ENCODE measurements at regions of chr3 and their contacts with region 1.

Region 1: DNA sequence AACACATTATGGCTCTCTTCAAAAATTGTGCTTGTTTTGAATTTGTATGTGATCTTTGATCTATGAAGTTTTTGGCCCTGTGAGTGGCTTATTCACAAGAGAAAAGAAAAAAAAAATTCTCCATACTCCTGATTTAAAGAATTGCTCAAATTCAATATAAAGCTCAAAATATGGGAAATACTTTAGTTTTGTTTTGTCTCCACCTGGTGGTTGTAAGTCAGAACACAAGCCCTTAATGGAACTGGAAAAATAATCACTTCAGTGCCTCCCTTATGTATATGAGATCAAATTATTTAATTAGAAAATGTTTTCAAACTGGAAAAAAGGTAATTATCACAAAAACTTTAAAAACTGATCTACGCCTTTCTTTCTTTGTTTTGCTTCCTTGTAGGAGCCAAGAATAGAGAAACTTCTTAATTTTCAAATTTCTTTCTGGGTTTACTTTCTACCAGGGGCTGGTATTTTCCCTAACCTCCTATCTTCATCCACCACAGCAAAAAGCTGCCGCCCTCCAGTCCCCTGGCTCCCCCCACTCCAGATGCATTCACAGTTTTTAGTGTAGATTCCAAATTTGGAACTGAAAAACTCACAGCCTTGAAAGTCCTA is 50.6 kb downstream of the SERP1 start:
- DNase-seq: no peak
- ATAC-seq: peak in 1 of 2 donors; percentile 44

Region 2: DNA sequence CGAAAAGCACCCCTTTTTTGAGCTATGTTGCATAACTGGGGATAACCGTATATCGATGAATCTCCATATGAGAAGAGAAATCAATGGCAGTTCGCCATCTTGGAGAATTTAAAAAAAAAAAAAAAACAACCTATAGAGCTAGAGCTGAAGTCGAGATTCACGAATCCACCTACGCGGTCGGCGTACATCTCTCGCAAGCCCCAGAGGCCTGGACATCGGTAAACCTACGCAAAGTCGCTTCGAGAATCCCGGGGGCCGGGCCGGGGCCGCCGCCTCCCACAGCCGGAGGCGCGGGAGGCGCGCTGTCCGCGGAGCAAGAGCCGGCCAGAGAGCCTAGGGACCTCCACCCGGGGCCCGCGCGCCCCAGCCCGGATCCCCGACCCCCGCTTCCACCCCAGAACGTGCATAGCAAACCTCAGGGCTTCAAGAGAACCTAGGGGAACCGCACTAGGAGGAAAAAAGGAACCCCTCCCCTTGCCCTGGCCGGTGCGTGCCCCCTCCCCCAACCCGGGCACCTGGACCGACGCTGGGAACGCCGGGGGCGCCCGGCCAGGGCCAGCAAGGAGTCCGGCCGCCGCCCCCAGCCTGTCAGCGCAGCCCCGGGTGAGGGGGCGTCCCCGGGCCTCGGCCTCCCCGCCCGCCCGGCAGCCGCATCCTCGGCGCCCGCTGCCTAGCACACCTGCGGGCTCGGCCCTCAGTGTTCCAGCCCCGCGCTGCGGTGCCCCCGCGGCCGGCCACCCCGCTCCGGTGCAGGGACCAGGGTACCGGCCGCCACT is 525.5 kb before region 1 on chr3:
- intact Hi-C with region 1: loop called in 1 of 2 experiments (anchors 10 kb)
- DNase-seq: peak; percentile 88
- ATAC-seq: peak; percentile 63 to 76

Region 3: GRCh38 chr3:150227839-150228238 is 267.8 kb before region 1 on chr3:
- intact Hi-C with region 1: loop called in 1 of 2 experiments (anchors 2 kb)
- DNase-seq: peak; percentile 48
- ATAC-seq: peak; percentile 59 to 61

Region 4: GRCh38 chr3:150286390-150287147 is 209.1 kb before region 1 on chr3:
- intact Hi-C with region 1: loop called (anchors 2 to 5 kb)
- DNase-seq: no peak
- ATAC-seq: peak in 1 of 2 donors; percentile 77

Region 5: DNA sequence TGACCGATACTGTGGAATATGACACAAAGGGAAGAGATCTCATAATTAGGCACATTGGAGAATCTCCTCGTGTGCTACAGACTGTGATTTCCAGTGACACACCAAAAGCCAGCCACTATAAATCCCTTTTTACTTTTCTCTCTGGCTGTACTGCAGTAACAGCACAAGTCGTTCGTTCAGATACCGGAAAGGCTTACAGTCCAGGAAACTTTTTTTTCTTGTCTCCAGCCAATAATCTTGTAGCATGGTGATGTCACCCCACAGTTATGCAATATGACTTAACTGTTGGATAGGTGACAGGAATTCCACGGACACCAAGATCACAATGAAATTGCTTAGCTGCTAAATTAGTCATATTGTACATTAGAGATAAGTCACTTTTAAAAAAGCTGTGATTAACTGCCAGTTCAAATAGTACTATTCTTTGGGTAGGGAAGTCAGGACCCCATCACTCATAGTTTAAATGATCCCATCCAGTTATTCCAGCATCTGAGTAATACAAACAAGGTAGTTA is 123.9 kb before region 1 on chr3:
- intact Hi-C with region 1: no loop called
- DNase-seq: peak; percentile 27
- ATAC-seq: peak; percentile 93 to 96

Region 6: GRCh38 chr3:150414959-150415358 is 80.7 kb before region 1 on chr3:
- intact Hi-C with region 1: loop called in 1 of 2 experiments (anchors 5 kb)
- DNase-seq: no peak
- ATAC-seq: no peak

Region 7: GRCh38 chr3:150546226-150547044 is 50.8 kb after region 1 on chr3 and contains the starts of genes EIF2A and SERP1:
- intact Hi-C with region 1: no loop called
- DNase-seq: peak; percentile 99
- ATAC-seq: peak; percentile 97
- total RNA-seq, gene EIF2A: 54.5 to 76.6 TPM
- total RNA-seq, gene SERP1: 42.4 to 47.2 TPM

Measured in left cardiac atrium (tissue), 4 donors.